ENCODE measurements at regions of chr12 and their contacts with region 1.

Region 1: DNA sequence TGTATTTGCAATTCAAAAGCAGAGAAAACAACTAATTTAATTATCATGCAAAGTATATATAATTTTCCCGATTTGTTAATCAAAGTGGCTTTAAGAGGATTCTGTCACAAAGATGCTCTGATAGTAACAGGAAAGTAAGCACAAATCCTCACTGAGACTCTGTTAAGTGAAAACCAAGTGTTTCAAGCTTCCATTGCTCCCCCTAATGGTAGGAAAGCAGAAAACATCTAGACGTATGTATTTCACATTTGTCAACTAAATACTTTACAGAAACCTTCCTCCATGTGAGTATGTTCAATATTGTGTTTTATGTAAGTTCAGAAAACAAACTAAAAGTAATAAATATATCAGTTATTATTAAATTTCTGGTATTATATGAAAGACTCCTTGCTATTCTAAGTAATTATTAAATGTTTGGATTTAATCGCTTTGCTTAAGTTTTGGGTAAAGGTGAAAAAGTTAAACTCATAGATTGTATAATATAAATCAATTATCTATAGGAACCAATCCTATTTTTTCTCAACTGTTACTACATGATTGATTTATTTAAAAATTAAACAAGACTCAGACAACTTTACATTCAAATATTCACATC is 1.5 kb upstream of the NTS start:
- DNase-seq: peak; percentile 24
- H3K4me3 ChIP-seq: no peak overlapping the region; a peak in 1 of 4 replicates
- H3K27ac ChIP-seq: no peak overlapping the region
- H3K4me1 ChIP-seq: no peaks in the 10 kb centered on the region
- H3K27me3 ChIP-seq: no peaks in the 10 kb centered on the region
- CTCF ChIP-seq: peak; percentile 83
- EP300 ChIP-seq: no peak
- RAD21 ChIP-seq: peak; percentile 72

Region 2: GRCh38 chr12:85468356-85469157 is 404.0 kb before region 1 on chr12:
- CTCF ChIA-PET with region 1: interaction called, 64 read pairs
- POLR2A ChIA-PET with region 1: no interaction called
- DNase-seq: peak; percentile 47
- H3K4me3 ChIP-seq: peak overlapping the region; percentile 42 to 51; a peak in 3 of 4 replicates
- H3K27ac ChIP-seq: no peak overlapping the region
- H3K4me1 ChIP-seq: peaks cover 0 to 9% of the 10 kb centered on the region in 2 experiments; a peak in 1 of 4 replicates
- H3K27me3 ChIP-seq: no peaks in the 10 kb centered on the region
- CTCF ChIP-seq: peak; percentile 91
- EP300 ChIP-seq: no peak
- RAD21 ChIP-seq: peak; percentile 85

Region 3: GRCh38 chr12:85781766-85782165 is 90.8 kb before region 1 on chr12:
- CTCF ChIA-PET with region 1: no interaction called
- POLR2A ChIA-PET with region 1: no interaction called
- DNase-seq: no peak
- H3K4me3 ChIP-seq: no peak overlapping the region
- H3K27ac ChIP-seq: no peak overlapping the region
- H3K4me1 ChIP-seq: peaks cover 0 to 5% of the 10 kb centered on the region in 2 experiments; a peak in 1 of 4 replicates
- H3K27me3 ChIP-seq: no peaks in the 10 kb centered on the region
- CTCF ChIP-seq: no peak
- EP300 ChIP-seq: no peak
- RAD21 ChIP-seq: no peak

Region 4: GRCh38 chr12:85855305-85855704 is 17.3 kb before region 1 on chr12:
- CTCF ChIA-PET with region 1: interaction called, 62 read pairs
- POLR2A ChIA-PET with region 1: no interaction called
- DNase-seq: no peak
- H3K4me3 ChIP-seq: no peak overlapping the region
- H3K27ac ChIP-seq: no peak overlapping the region
- H3K4me1 ChIP-seq: no peaks in the 10 kb centered on the region
- H3K27me3 ChIP-seq: no peaks in the 10 kb centered on the region
- CTCF ChIP-seq: no peak
- EP300 ChIP-seq: no peak
- RAD21 ChIP-seq: no peak

Region 5: DNA sequence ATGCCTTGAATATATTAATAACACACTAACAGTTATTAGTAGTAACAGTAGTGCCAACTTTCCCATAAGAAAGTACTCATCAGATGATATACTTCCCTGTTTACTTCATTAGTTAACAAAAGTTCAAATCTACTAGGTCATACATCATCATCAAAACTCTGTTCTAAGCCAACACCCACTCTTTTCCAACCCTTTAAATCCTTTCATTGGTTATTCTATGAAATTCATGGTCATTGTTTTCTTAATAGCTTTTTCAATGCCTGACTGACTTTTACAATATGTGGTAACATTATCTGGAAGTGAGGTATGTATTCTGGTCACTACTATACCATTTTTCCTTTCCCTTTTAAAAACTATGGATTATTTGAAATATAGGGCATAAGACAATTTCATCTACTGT is 11.2 kb after region 1 on chr12:
- CTCF ChIA-PET with region 1: interaction called, 21 read pairs
- POLR2A ChIA-PET with region 1: no interaction called
- DNase-seq: no peak
- H3K4me3 ChIP-seq: no peak overlapping the region
- H3K27ac ChIP-seq: no peak overlapping the region
- H3K4me1 ChIP-seq: no peaks in the 10 kb centered on the region
- H3K27me3 ChIP-seq: no peaks in the 10 kb centered on the region; the same call in 1 of the 2 replicates
- CTCF ChIP-seq: no peak
- EP300 ChIP-seq: no peak
- RAD21 ChIP-seq: no peak

Measured in SK-N-SH (cell line).